Activated CD4-positive, alpha-beta T cell treated with anti-CD3 and anti-CD28 coated beads, Interleukin-2, amount 10 ng/mL, durations not matched to agents 24 days and 14 days (primary cell): ENCODE measurements at regions of chr4 and their contacts with region 1.

Region 1: GRCh38 chr4:1249148-1249730 is 309 bp upstream of the CTBP1 start:
- DNase-seq: peak; percentile 96
- H3K4me3 Mint-ChIP-seq: peak overlapping the region; percentile 90
- H3K27ac Mint-ChIP-seq: peak overlapping the region; percentile 97
- H3K4me1 Mint-ChIP-seq: peaks cover 44% of the 10 kb centered on the region
- H3K27me3 Mint-ChIP-seq: no peaks in the 10 kb centered on the region

Region 2: DNA sequence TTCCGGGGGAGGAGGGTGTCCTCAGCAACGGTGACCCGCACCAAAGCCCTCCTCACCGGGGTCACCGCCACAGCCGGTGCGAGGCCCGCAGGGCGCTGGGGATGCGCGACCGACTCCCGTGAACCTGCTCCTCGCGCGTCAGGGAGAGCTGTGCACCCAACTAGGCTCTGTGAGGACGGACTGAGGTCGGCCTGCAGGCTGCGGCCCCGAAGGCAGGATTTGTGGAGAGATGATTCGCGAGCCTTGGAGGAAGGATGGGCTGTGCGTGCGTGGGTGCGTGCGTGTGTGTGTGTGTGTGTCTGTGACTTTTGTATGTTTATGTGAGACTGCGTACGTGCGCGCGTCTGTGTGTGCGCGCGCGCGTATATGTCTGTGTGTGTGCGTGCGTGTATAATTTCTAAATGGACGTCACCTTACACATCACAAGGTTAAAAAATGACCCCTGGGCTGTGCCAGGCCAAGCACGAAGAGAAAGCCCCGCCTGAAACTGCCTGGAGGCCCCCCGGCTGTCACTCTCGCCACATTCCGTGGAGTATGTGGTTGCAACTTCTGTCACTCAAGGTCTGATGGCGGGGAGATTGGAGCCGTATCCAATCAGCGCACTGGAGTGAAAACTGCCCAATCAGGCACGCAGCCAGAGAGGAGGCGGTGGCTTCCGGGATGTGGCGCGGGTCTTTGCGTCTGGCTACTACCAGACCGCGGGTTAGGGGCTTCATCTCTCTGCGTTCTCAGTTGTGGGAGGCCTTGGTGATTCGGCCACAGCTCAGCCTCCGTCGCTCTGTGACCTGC is 911.9 kb before region 1 on chr4 and contains the start of gene ZNF141:
- intact Hi-C with region 1: loop called (anchors 5 kb)
- DNase-seq: peak; percentile 97
- H3K4me3 Mint-ChIP-seq: peak within 1 kb of the TSS; percentile 99
- H3K27ac Mint-ChIP-seq: peak within 1 kb of the TSS; percentile 100
- H3K4me1 Mint-ChIP-seq: peaks cover 14% of the 10 kb centered on the region
- H3K27me3 Mint-ChIP-seq: peaks cover 2% of the 10 kb centered on the region
- total RNA-seq, gene ZNF141: 25.4 and 27.0 TPM in 2 replicates

Region 3: GRCh38 chr4:1130316-1131186 is 118.7 kb before region 1 on chr4:
- intact Hi-C with region 1: loop called (anchors 5 kb)
- DNase-seq: peak; percentile 95
- H3K4me3 Mint-ChIP-seq: no peak overlapping the region
- H3K27ac Mint-ChIP-seq: no peak overlapping the region
- H3K4me1 Mint-ChIP-seq: peaks cover 3% of the 10 kb centered on the region
- H3K27me3 Mint-ChIP-seq: peaks cover 24% of the 10 kb centered on the region

Region 4: GRCh38 chr4:1266881-1267763 is 17.9 kb after region 1 on chr4:
- intact Hi-C with region 1: loop called (anchors 1 kb)
- DNase-seq: no peak
- H3K4me3 Mint-ChIP-seq: peak overlapping the region; percentile 68
- H3K27ac Mint-ChIP-seq: peak overlapping the region; percentile 86
- H3K4me1 Mint-ChIP-seq: peaks cover 18% of the 10 kb centered on the region
- H3K27me3 Mint-ChIP-seq: no peaks in the 10 kb centered on the region

Region 5: DNA sequence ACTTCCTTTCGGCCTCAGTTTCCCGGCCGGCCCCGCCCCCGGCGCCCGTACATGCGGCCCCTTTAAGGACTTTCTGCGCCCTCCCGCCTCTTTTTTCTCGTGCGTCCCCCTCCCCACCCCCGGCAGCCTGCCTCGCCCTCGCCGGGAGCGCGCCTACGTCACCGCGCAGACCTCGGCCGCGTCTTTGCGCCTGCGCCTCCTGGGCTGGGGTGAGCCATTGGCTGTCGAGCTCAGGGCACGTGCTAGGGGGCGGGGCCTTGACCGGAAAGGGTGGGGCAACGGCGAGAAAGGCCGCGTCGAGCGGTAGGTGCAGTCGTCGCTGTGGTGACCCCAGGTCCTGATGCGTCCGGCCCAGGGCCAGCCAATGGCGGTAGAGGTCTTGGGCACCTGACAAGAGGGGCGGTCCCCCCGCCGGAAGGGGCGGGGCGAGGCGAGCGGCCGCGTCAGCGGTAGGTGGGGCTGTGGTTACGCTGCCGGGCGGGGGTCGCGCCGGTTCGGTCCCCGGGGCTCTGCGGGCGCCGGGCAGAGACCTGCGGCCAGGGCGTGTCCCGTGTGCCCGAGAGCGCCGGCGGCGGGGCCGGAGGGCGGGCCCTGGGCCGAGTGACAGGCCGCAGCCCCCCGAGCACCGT is 97.7 kb after region 1 on chr4 and contains the start of gene UVSSA:
- intact Hi-C with region 1: loop called (anchors 1 kb)
- DNase-seq: peak; percentile 100
- H3K4me3 Mint-ChIP-seq: peak within 1 kb of the TSS; percentile 98
- H3K27ac Mint-ChIP-seq: peak within 1 kb of the TSS; percentile 94
- H3K4me1 Mint-ChIP-seq: peaks cover 35% of the 10 kb centered on the region
- H3K27me3 Mint-ChIP-seq: no peaks in the 10 kb centered on the region
- total RNA-seq, gene UVSSA: 28.3 and 28.4 TPM in 2 replicates